Natural killer cell (primary cell): ENCODE measurements at regions of chr3 and their contacts with region 1.

Region 1: GRCh38 chr3:71226565-71227269 is 356.8 kb downstream of the FOXP1 start:
- DNase-seq: peak; percentile 81
- ATAC-seq: peak; percentile 78 to 85 (median 85)
- H3K4me3 ChIP-seq: peak overlapping the region; percentile 2
- H3K4me3 Mint-ChIP-seq: peak overlapping the region; percentile 96
- H3K27ac ChIP-seq: peak overlapping the region; percentile 52
- H3K27ac Mint-ChIP-seq: peak overlapping the region; percentile 82 to 95
- H3K4me1 ChIP-seq: peaks cover 22% of the 10 kb centered on the region
- H3K4me1 Mint-ChIP-seq: peaks cover 24 to 27% of the 10 kb centered on the region in 2 donors
- H3K27me3 ChIP-seq: no peaks in the 10 kb centered on the region
- H3K27me3 Mint-ChIP-seq: peaks cover 5 to 13% of the 10 kb centered on the region in 2 donors
- CTCF ChIP-seq: no peak

Region 2: DNA sequence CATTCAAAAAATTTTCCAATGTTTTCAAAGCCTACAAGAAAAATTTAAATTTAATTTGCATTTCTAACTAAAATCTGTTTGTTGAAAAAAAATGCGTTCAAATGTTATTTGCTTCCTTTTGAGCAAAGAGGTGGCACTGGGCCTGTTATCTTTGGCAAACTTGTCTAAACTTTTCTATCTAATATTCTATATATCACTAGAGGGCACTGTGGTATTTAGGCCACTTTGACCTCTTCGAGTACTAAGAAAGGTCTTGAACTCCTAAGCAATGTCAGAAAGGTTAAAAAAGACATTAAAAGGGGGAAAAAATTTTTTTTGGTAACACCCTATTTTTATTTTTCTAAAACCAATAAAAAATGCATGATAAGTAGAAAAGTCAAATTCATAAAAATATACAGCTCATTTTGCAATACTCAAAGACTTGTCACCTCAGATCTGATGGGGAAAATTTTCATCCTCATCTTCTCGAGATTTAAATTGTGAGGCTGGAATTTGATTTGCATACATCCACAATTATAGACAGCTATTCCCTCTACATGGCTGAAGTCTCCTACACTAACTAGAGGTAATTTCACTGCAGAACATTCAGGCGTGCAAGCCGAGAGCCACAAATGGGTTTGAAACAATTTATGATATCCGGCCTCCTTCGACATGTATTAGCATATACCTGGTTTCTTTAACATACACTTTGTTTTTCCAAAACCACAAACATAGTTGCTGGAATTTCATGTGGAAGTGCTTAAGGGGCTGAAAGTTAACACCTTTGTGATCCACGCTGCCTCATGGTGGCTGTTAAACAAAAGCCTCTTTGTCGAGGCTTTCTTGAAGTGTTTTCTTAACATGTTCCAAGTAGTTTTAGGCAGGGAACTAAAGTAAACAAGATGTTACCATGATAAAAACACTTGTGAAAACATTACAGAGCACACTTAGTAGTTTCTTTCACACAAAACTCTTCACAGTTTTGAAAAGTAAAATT is 219.6 kb before region 1 on chr3:
- intact Hi-C with region 1: loop called (anchors 5 kb)
- DNase-seq: peak in 1 of 2 donors; percentile 63
- ATAC-seq: peak; percentile 61 to 76 (median 76)
- H3K4me3 ChIP-seq: no peak overlapping the region
- H3K4me3 Mint-ChIP-seq: no peak overlapping the region
- H3K27ac ChIP-seq: no peak overlapping the region
- H3K27ac Mint-ChIP-seq: peak overlapping the region; percentile 69 to 87
- H3K4me1 ChIP-seq: peaks cover 12% of the 10 kb centered on the region
- H3K4me1 Mint-ChIP-seq: peaks cover 52% of the 10 kb centered on the region in 2 donors
- H3K27me3 ChIP-seq: no peaks in the 10 kb centered on the region
- H3K27me3 Mint-ChIP-seq: no peaks in the 10 kb centered on the region
- CTCF ChIP-seq: peak; percentile 80

Region 3: GRCh38 chr3:71130471-71131374 is 96.0 kb before region 1 on chr3:
- intact Hi-C with region 1: loop called (anchors 1 kb)
- DNase-seq: peak; percentile 62 to 88
- ATAC-seq: peak; percentile 74 to 87 (median 84)
- H3K4me3 ChIP-seq: peak overlapping the region; percentile 63
- H3K4me3 Mint-ChIP-seq: peak overlapping the region; percentile 95
- H3K27ac ChIP-seq: peak overlapping the region; percentile 86
- H3K27ac Mint-ChIP-seq: peak overlapping the region; percentile 93 to 98
- H3K4me1 ChIP-seq: peaks cover 18% of the 10 kb centered on the region
- H3K4me1 Mint-ChIP-seq: peaks cover 62 to 69% of the 10 kb centered on the region in 2 donors
- H3K27me3 ChIP-seq: no peaks in the 10 kb centered on the region
- H3K27me3 Mint-ChIP-seq: no peaks in the 10 kb centered on the region
- CTCF ChIP-seq: no peak

Region 4: DNA sequence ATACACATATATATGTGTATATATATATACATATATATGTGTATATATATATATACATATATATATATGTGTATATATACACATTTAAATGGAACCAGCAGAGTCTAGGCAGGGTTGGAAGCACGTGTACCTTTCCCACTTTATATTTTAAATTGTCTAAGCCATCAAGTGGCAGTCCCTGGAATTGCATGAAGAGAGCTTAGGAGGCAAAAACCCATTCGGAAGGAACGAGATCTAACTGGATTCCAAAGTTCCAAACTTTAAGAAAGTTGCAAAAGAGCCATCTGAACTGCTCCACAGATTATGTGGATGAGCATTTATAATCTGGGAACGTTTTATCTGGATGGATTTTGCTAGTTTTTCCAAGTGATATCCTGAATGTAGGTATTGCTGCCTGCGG is 170.3 kb after region 1 on chr3:
- intact Hi-C with region 1: loop called (anchors 10 kb)
- DNase-seq: peak in 1 of 2 donors; percentile 52
- ATAC-seq: no peak
- H3K4me3 ChIP-seq: no peak overlapping the region
- H3K4me3 Mint-ChIP-seq: no peak overlapping the region
- H3K27ac ChIP-seq: no peak overlapping the region
- H3K27ac Mint-ChIP-seq: no peak overlapping the region
- H3K4me1 ChIP-seq: peaks cover 3% of the 10 kb centered on the region
- H3K4me1 Mint-ChIP-seq: peaks cover 21 to 22% of the 10 kb centered on the region in 2 donors
- H3K27me3 ChIP-seq: no peaks in the 10 kb centered on the region
- H3K27me3 Mint-ChIP-seq: no peaks in the 10 kb centered on the region
- CTCF ChIP-seq: peak; percentile 26

Region 5: DNA sequence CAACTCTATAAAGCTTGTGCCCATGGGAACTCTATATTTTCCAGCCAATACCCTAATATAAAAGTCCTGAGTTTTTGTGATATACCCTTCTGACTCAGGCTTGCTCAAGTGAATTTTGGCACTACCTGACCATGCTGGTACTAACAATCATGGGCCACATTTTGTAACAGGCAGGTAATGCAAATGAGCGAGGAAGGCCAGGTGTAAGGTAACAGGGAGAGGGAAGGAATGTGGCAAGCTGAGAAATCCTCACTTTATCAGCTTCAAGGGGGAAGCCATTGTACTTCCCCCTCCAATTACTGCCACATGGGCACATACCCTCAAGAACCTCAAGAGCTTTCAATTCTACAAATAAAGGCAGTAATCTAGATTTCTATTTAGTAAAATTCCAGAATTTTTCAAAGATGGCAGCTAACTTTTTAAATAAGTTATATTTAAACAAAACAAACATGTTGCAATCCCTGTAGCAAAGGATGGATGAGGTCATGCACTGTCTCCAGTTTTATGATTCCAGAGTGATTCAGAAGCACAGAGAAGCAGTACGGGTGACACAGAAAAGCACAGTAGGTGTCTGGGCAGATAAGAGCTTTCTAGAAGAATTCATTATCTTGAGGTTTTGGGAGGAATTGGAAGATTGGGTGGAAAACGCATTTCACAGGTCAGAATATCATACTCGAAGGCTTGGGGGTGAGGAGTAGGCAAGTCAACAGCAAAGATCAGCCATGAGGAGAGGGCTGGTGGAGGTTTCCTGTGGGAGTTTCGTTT is 269.2 kb after region 1 on chr3:
- intact Hi-C with region 1: loop called (anchors 10 kb)
- DNase-seq: peak in 1 of 2 donors; percentile 67
- ATAC-seq: peak; percentile 41 to 63 (median 62)
- H3K4me3 ChIP-seq: no peak overlapping the region
- H3K4me3 Mint-ChIP-seq: peak overlapping the region; percentile 84
- H3K27ac ChIP-seq: peak overlapping the region; percentile 60
- H3K27ac Mint-ChIP-seq: peak overlapping the region; percentile 86 to 95
- H3K4me1 ChIP-seq: peaks cover 35% of the 10 kb centered on the region
- H3K4me1 Mint-ChIP-seq: peaks cover 57 to 67% of the 10 kb centered on the region in 2 donors
- H3K27me3 ChIP-seq: no peaks in the 10 kb centered on the region
- H3K27me3 Mint-ChIP-seq: no peaks in the 10 kb centered on the region
- CTCF ChIP-seq: no peak

Region 6: DNA sequence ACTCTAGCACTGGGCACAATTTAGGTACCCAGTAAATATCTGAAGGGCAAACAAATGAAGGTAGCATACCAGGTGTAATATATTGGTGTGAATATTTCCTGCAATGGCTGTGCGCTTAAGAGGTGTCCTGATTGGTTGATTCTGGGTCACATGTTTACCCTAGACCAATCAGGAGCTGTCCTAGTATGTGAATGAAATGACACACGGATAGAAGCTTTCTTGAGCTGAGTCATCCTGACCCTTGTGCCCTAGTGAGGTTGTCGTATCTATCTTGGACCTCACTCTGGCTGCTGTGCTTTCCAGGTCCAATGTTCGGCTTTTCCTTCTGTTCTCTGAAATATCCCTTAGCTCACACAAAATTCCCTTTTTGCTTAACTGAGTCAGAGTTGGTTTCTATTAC is 415.0 kb after region 1 on chr3:
- intact Hi-C with region 1: no loop called
- DNase-seq: no peak
- ATAC-seq: no peak
- H3K4me3 ChIP-seq: no peak overlapping the region
- H3K4me3 Mint-ChIP-seq: no peak overlapping the region
- H3K27ac ChIP-seq: no peak overlapping the region
- H3K27ac Mint-ChIP-seq: no peak overlapping the region
- H3K4me1 ChIP-seq: no peaks in the 10 kb centered on the region
- H3K4me1 Mint-ChIP-seq: no peaks in the 10 kb centered on the region
- H3K27me3 ChIP-seq: no peaks in the 10 kb centered on the region
- H3K27me3 Mint-ChIP-seq: no peaks in the 10 kb centered on the region
- CTCF ChIP-seq: no peak